WTC11 (cell line): ENCODE measurements at regions of chr22 and their contacts with region 1.

Region 1: GRCh38 chr22:49701380-49702067 is 126.1 kb downstream of the BRD1 start:
- DNase-seq: no peak
- ATAC-seq: no peak
- H3K4me3 Mint-ChIP-seq: no peak overlapping the region
- H3K27ac Mint-ChIP-seq: no peak overlapping the region
- H3K4me1 Mint-ChIP-seq: peaks cover 7% of the 10 kb centered on the region
- H3K27me3 Mint-ChIP-seq: no peaks in the 10 kb centered on the region
- CTCF ChIP-seq: peak; percentile 78

Region 2: DNA sequence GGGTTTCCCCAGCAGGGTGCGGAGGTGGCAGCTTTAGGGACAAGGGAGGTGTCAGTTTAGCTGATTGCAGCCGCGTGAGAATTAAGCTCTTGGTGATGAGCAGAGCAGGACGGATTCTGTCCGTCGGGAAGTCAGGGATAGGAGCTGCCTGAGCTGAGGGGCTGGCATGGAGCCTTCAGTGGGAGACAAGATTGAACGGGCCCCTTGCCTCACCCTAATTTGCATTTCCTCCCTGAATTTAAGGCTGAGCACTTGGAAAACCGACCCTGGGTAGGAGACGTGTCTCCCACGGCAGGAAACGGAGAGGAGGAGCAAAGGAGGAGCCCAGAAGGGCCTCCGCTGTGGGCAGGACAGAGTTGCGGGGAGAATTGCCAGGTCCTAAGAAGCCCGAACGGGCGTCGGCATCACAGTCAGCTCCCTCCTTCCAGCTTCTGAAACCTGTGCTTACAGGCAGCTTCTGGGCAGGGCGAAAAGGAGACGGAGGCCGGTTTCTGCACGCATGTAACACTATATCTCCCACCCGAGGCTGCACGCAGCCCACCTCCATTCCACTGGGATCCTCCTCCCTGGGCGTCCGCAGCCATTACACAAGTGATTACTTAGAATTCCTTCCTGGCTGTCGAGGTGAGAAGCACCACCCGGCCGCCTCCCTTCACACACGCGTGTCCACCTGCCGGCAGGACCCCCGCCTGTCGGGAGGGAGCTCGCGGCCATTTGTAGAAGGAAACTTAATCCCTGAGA is 219.7 kb before region 1 on chr22:
- CTCF ChIA-PET with region 1: no interaction called
- POLR2A ChIA-PET with region 1: no interaction called
- DNase-seq: no peak
- ATAC-seq: peak; percentile 78
- H3K4me3 Mint-ChIP-seq: peak overlapping the region; percentile 29; the same call in 1 of the 2 replicates
- H3K27ac Mint-ChIP-seq: no peak overlapping the region; the same call in 1 of the 2 replicates
- H3K4me1 Mint-ChIP-seq: peaks cover 50% of the 10 kb centered on the region
- H3K27me3 Mint-ChIP-seq: no peaks in the 10 kb centered on the region; the same call in 1 of the 2 replicates
- CTCF ChIP-seq: no peak

Region 3: GRCh38 chr22:49676783-49677494 is 24.6 kb before region 1 on chr22:
- CTCF ChIA-PET with region 1: interaction called, 11 read pairs
- POLR2A ChIA-PET with region 1: no interaction called
- DNase-seq: no peak
- ATAC-seq: no peak
- H3K4me3 Mint-ChIP-seq: no peak overlapping the region
- H3K27ac Mint-ChIP-seq: no peak overlapping the region
- H3K4me1 Mint-ChIP-seq: peaks cover under 1% of the 10 kb centered on the region
- H3K27me3 Mint-ChIP-seq: peaks cover 21% of the 10 kb centered on the region
- CTCF ChIP-seq: no peak

Region 4: DNA sequence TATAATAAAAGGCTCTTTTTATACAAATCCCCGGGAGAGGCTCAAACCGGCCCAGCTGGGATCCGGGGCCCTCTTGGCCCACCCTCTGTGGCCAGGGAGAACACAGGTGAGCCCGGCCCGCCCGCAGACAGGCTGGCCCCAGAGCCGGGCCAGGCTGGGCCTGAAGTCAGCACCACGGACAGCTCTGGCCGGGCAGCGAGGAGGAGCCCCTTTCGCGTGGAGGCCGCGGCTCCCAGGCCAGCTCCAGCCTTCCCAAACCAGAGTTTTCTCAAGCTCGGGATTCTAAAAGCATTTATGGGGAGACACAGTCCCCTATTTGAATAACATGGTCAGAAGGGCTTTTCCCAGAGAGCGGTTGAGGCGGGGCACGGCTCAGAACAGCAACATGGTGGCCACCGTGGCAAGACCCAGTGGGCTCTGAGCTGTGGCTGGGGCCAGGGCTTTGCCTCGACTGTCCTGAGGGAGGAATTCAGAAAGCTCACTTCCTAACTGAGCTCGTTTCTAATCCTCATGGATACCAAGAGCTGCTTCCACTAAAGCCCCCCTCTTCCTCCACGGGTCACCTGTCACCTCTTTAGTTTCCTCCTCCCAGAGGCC is 10.8 kb after region 1 on chr22:
- CTCF ChIA-PET with region 1: interaction called, 16 read pairs
- POLR2A ChIA-PET with region 1: no interaction called
- DNase-seq: peak; percentile 72
- ATAC-seq: peak; percentile 89
- H3K4me3 Mint-ChIP-seq: no peak overlapping the region
- H3K27ac Mint-ChIP-seq: no peak overlapping the region
- H3K4me1 Mint-ChIP-seq: peaks cover 10% of the 10 kb centered on the region
- H3K27me3 Mint-ChIP-seq: no peaks in the 10 kb centered on the region; the same call in 1 of the 2 replicates
- CTCF ChIP-seq: no peak

Region 5: GRCh38 chr22:49760630-49761571 is 59.4 kb after region 1 on chr22:
- CTCF ChIA-PET with region 1: no interaction called
- POLR2A ChIA-PET with region 1: no interaction called
- DNase-seq: no peak
- ATAC-seq: peak; percentile 44; the same call in 1 of the 2 replicates
- H3K4me3 Mint-ChIP-seq: no peak overlapping the region
- H3K27ac Mint-ChIP-seq: peak overlapping the region; percentile 35; the same call in 1 of the 2 replicates
- H3K4me1 Mint-ChIP-seq: peaks cover 5% of the 10 kb centered on the region; the same call in 1 of the 2 replicates
- H3K27me3 Mint-ChIP-seq: peaks cover 4% of the 10 kb centered on the region
- CTCF ChIP-seq: no peak